Activated T-helper 2 cell treated with anti-CD3 and anti-CD28 coated beads, Interferon-gamma antibody, Interleukin-2, Interleukin-4, amounts not matched to agents 10 μg/mL and 5 μg/mL and 100 μg/mL, durations not matched to agents 14 hours and 24 hours and 36 hours (primary cell): ENCODE measurements at regions of chr2 and their contacts with region 1.

Region 1: GRCh38 chr2:155377266-155377680 is 678.8 kb downstream of the KCNJ3 start:
- DNase-seq: no peak
- H3K4me3 Mint-ChIP-seq: no peak overlapping the region
- H3K27ac Mint-ChIP-seq: peak overlapping the region; percentile 73
- H3K4me1 Mint-ChIP-seq: peaks cover 17% of the 10 kb centered on the region
- H3K27me3 Mint-ChIP-seq: peaks cover 9% of the 10 kb centered on the region

Region 2: GRCh38 chr2:155815886-155816285 is 438.6 kb after region 1 on chr2:
- intact Hi-C with region 1: loop called (anchors 10 kb)
- DNase-seq: no peak
- H3K4me3 Mint-ChIP-seq: no peak overlapping the region
- H3K27ac Mint-ChIP-seq: no peak overlapping the region
- H3K4me1 Mint-ChIP-seq: no peaks in the 10 kb centered on the region
- H3K27me3 Mint-ChIP-seq: no peaks in the 10 kb centered on the region

Region 3: GRCh38 chr2:156476850-156477206 is 1099.6 kb after region 1 on chr2:
- intact Hi-C with region 1: loop called (anchors 2 kb)
- DNase-seq: no peak
- H3K4me3 Mint-ChIP-seq: no peak overlapping the region
- H3K27ac Mint-ChIP-seq: peak overlapping the region; percentile 66
- H3K4me1 Mint-ChIP-seq: peaks cover 53% of the 10 kb centered on the region
- H3K27me3 Mint-ChIP-seq: no peaks in the 10 kb centered on the region

Region 4: DNA sequence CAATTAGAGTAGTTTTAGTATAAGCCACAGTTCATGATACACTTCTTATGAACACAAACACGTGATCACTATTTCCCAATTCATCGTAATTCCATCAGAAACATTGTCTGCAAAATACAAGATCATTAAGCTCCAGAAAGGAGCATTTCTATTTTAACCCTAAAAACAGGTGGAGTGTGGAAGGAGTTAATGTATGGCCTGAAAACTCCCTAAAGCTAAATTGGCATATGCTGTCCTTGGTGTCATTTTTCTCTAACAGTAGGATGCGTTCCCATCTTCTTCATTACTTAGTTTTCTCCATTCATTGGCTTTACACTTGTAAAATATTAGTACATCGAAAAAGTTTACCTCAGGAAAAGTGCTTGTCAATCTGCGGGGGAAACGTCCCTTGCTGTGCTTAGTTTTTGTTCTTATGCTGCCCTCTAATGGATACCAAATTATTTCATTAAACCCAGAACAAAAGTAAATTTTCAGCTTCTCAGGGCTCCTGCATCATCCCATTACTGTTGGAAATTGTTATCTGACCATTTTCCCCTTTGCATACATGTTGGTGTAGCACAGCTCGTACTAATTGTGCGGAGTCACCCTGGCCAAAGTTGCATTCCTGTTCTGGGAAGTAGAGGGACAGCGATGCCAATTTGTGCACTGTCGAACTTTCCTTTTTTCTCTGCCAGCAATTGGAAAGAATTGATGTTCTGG is 1212.3 kb after region 1 on chr2:
- intact Hi-C with region 1: loop called (anchors 2 kb)
- DNase-seq: no peak
- H3K4me3 Mint-ChIP-seq: no peak overlapping the region
- H3K27ac Mint-ChIP-seq: no peak overlapping the region
- H3K4me1 Mint-ChIP-seq: peaks cover 11% of the 10 kb centered on the region
- H3K27me3 Mint-ChIP-seq: no peaks in the 10 kb centered on the region

Region 5: GRCh38 chr2:157055660-157056199 is 1678.5 kb after region 1 on chr2:
- intact Hi-C with region 1: loop called (anchors 10 kb)
- DNase-seq: no peak
- H3K4me3 Mint-ChIP-seq: no peak overlapping the region
- H3K27ac Mint-ChIP-seq: no peak overlapping the region
- H3K4me1 Mint-ChIP-seq: peaks cover 2% of the 10 kb centered on the region
- H3K27me3 Mint-ChIP-seq: peaks cover 8% of the 10 kb centered on the region